Left ventricle myocardium superior (tissue), 1 donor: ENCODE measurements at regions of chr6 and their contacts with region 1.

Region 1: GRCh38 chr6:145028144-145028818 is 707.0 kb downstream of the EPM2A start:
- DNase-seq: no peak
- ATAC-seq: peak; percentile 46

Region 2: DNA sequence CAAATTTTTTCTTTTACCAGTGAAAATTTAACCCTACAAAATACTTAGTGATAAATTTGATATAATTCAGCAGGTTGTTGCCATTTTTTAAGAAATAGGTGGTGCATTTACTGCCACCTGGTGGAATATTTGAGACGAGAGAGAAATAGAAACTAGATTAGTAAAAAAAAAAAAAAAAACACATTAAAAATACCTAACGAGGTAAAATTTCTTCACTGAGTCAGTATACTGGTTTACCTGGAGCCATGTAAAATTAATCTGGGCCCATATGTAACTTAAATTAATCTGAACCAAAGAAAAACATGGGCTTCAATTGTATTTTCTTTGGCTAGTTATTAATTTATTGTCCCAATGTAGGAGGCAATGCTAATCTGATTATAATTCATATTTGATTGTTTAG is 186.3 kb after region 1 on chr6:
- intact Hi-C with region 1: loop called (anchors 5 kb)
- DNase-seq: no peak
- ATAC-seq: no peak